ENCODE measurements at regions of chr5 and their contacts with region 1.

Region 1: GRCh38 chr5:123359454-123360200 is 63.6 kb downstream of the CEP120 start:
- DNase-seq: no peak
- H3K4me3 ChIP-seq: no peak overlapping the region
- H3K27ac ChIP-seq: peak overlapping the region in 2 of 4 donors; percentile 24 to 34
- H3K4me1 ChIP-seq: peaks cover 0 to 52% (median 48%) of the 10 kb centered on the region in 4 donors
- H3K27me3 ChIP-seq: no peaks in the 10 kb centered on the region
- CTCF ChIP-seq: no peak
- EP300 ChIP-seq: no peak
- POLR2A ChIP-seq: no peak

Region 2: GRCh38 chr5:123036391-123037103 is 323.1 kb before region 1 on chr5 and contains the start of gene PPIC:
- intact Hi-C with region 1: loop called (anchors 5 kb)
- DNase-seq: peak; percentile 95
- H3K4me3 ChIP-seq: peak within 1 kb of the TSS; percentile 78 to 93 (median 86)
- H3K27ac ChIP-seq: peak within 1 kb of the TSS; percentile 87 to 95 (median 93)
- H3K4me1 ChIP-seq: peaks cover 20 to 31% (median 24%) of the 10 kb centered on the region in 4 donors
- H3K27me3 ChIP-seq: no peaks in the 10 kb centered on the region
- CTCF ChIP-seq: no peak
- EP300 ChIP-seq: no peak
- POLR2A ChIP-seq: peak; percentile 2
- total RNA-seq, gene PPIC: 14.2 to 47.4 (median 44.3) TPM

Region 3: DNA sequence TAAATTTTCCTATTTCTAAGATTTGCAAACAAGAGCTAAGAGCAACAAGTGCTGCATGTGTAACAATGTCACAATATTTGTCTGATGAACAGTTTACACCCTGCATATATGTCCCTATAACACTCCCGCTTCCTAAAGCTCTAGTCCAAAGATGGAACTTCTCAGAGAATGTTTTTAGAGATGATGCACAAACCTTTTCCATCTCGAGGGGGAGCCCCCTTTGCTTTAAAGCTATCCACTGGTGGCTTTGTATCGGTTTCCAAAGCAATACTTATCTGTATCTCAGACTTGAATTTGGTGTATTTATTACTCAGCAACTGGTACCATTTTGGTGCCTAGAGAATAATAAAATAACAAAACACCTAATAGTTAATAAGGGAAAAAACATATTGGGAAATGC is 52.6 kb after region 1 on chr5:
- intact Hi-C with region 1: no loop called
- DNase-seq: no peak
- H3K4me3 ChIP-seq: no peak overlapping the region
- H3K27ac ChIP-seq: no peak overlapping the region
- H3K4me1 ChIP-seq: no peaks in the 10 kb centered on the region
- H3K27me3 ChIP-seq: no peaks in the 10 kb centered on the region
- CTCF ChIP-seq: no peak
- EP300 ChIP-seq: no peak
- POLR2A ChIP-seq: no peak

Measured in esophagus muscularis mucosa (tissue), 4 donors.